ENCODE measurements at regions of chr19 and their contacts with region 1.

Region 1: DNA sequence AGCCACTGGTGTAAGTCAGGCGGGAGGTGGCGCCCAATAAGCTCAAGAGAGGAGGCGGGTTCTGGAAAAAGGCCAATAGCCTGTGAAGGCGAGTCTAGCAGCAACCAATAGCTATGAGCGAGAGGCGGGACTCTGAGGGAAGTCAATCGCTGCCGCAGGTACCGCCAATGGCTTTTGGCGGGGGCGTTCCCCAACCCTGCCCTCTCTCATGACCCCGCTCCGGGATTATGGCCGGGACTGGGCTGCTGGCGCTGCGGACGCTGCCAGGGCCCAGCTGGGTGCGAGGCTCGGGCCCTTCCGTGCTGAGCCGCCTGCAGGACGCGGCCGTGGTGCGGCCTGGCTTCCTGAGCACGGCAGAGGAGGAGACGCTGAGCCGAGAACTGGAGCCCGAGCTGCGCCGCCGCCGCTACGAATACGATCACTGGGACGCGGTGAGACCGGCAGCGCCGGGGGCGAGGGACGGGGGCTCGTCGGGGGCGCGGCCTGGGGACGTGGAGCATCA is at the start of gene ALKBH7:
- DNase-seq: peak; percentile 99
- ATAC-seq: peak; percentile 73
- H3K4me3 ChIP-seq: peak within 1 kb of the TSS; percentile 45 to 96 (median 93)
- H3K4me3 Mint-ChIP-seq: peak within 1 kb of the TSS; percentile 91
- H3K27ac ChIP-seq: peak within 1 kb of the TSS; percentile 88 to 98
- H3K27ac Mint-ChIP-seq: peak within 1 kb of the TSS; percentile 91
- H3K4me1 ChIP-seq: peaks cover 9 to 12% of the 10 kb centered on the region in 2 donors
- H3K4me1 Mint-ChIP-seq: peaks cover 11% of the 10 kb centered on the region
- H3K27me3 ChIP-seq: no peaks in the 10 kb centered on the region
- H3K27me3 Mint-ChIP-seq: no peaks in the 10 kb centered on the region
- CTCF ChIP-seq: no peak
- total RNA-seq, gene ALKBH7: 62.7 and 67.0 TPM in 2 replicates

Region 2: DNA sequence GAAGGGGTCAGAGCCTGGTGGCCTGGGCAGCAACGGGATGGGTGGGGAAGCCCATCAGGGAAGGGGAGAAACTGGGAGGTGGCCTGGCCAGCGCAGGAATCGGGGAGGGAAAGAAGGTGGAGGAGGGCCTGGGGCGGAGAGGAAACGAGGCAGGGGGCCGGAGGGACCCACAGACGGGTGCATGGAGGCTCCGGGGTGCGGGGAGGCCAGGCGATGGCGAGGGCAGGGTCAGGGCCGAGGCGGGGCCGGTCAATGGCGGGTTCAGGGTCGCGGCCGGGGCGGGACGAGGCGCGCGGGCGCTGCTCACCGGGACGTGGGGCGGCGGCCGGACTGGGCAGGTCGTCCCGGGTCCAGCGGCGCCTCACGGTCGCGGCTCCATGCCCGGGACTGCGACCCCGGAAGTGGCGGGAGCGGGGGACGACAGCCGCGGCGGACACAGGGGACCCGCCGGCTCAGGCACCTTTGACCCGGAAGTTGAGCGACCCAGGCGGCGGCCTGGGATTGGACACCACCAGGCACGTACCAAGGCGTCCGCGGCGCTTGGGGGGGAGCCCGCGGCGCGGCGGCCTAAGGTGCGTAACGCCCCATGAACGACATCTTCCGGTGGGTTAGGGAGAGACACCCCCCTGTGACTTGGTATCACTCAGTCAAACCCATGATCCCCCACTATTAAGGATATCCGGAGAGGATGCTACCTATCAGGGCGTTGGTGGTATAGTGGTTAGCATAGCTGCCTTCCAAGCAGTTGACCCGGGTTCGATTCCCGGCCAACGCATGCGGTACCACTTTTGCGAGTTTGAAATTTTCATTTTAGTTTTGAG is 1649.1 kb before region 1 on chr19 and contains the start of gene DPP9:
- CTCF ChIA-PET with region 1: no interaction called
- POLR2A ChIA-PET with region 1: no interaction called
- intact Hi-C with region 1: loop called (anchors 5 kb)
- DNase-seq: peak; percentile 100
- ATAC-seq: peak; percentile 94
- H3K4me3 ChIP-seq: peak within 1 kb of the TSS; percentile 71 to 97 (median 91)
- H3K4me3 Mint-ChIP-seq: peak within 1 kb of the TSS; percentile 97
- H3K27ac ChIP-seq: peak within 1 kb of the TSS; percentile 63 to 89
- H3K27ac Mint-ChIP-seq: peak within 1 kb of the TSS; percentile 98
- H3K4me1 ChIP-seq: peaks cover 20 to 26% of the 10 kb centered on the region in 2 donors
- H3K4me1 Mint-ChIP-seq: peaks cover 45% of the 10 kb centered on the region
- H3K27me3 ChIP-seq: no peaks in the 10 kb centered on the region
- H3K27me3 Mint-ChIP-seq: peaks cover 3% of the 10 kb centered on the region
- CTCF ChIP-seq: no peak
- total RNA-seq, gene DPP9: 109 and 115 TPM in 2 replicates

Region 3: GRCh38 chr19:6279931-6280591 is 92.6 kb before region 1 on chr19 and contains the start of gene MLLT1:
- CTCF ChIA-PET with region 1: no interaction called
- POLR2A ChIA-PET with region 1: no interaction called
- intact Hi-C with region 1: loop called (anchors 1 kb)
- DNase-seq: peak; percentile 97
- ATAC-seq: peak; percentile 97
- H3K4me3 ChIP-seq: peak within 1 kb of the TSS; percentile 44 to 85 (median 62)
- H3K4me3 Mint-ChIP-seq: peak within 1 kb of the TSS; percentile 89
- H3K27ac ChIP-seq: peak within 1 kb of the TSS; percentile 29 to 77
- H3K27ac Mint-ChIP-seq: peak within 1 kb of the TSS; percentile 64
- H3K4me1 ChIP-seq: peaks cover 15 to 23% of the 10 kb centered on the region in 2 donors
- H3K4me1 Mint-ChIP-seq: peaks cover 27% of the 10 kb centered on the region
- H3K27me3 ChIP-seq: no peaks in the 10 kb centered on the region
- H3K27me3 Mint-ChIP-seq: no peaks in the 10 kb centered on the region
- CTCF ChIP-seq: peak; percentile 90
- total RNA-seq, gene MLLT1: 40.2 and 45.7 TPM in 2 replicates

Region 4: GRCh38 chr19:6362027-6362350 is 10.7 kb before region 1 on chr19:
- CTCF ChIA-PET with region 1: interaction called, 3 read pairs
- POLR2A ChIA-PET with region 1: interaction called, 25 read pairs
- intact Hi-C with region 1: loop called (anchors 1 kb)
- DNase-seq: no peak
- ATAC-seq: no peak
- H3K4me3 ChIP-seq: peak overlapping the region in 4 of 5 experiments; percentile 60 to 72 (median 66)
- H3K4me3 Mint-ChIP-seq: peak overlapping the region; percentile 94
- H3K27ac ChIP-seq: peak overlapping the region; percentile 60 to 79
- H3K27ac Mint-ChIP-seq: peak overlapping the region; percentile 92
- H3K4me1 ChIP-seq: peaks cover 6 to 12% of the 10 kb centered on the region in 2 donors
- H3K4me1 Mint-ChIP-seq: peaks cover 14% of the 10 kb centered on the region
- H3K27me3 ChIP-seq: no peaks in the 10 kb centered on the region
- H3K27me3 Mint-ChIP-seq: no peaks in the 10 kb centered on the region
- CTCF ChIP-seq: no peak

Region 5: DNA sequence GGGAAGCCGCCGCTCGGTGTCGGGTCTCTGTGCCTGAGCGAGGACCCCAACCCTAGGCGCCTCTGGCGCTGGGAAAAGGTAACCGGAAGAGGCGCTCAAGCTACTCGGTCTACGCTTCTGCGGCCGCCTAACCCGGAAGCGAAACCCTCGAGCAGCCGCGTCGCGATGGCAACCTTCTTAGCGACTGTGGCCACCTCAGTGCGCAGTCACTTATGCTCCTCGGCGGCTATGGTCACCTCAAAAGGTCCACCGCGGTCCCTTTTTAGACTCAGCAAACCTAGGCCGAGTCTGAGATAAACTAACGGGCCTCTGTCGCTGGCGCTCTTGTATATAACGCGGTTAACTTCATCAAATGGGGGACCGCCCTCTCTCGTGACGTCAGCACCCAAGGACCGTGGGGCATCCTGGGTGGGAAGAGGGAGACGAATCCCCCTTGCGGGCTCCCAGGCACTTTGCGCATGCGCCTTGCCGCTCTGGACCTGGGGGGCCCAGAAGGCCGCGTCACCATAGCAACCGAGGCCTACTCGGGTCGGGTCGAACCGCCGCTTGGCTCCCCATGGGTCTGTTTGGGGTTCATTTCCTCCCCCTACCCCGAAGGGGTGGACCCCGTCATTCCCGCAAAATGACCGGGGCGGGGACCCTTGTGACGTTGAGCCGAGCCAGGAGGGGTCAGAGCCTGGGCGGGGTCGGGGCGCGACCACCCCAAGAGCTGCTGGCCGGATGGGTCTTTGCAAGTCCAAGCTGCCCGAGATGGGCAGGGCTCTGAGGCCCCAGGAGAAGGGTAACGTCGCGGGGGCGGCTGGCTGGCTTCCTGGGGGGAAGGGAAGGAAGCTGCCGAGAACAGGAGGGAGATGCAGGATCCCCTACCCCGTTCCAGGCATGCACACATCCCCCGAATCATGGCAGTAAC is 20.7 kb after region 1 on chr19 and contains the start of gene GTF2F1:
- CTCF ChIA-PET with region 1: interaction called, 5 read pairs
- POLR2A ChIA-PET with region 1: interaction called, 14 read pairs
- intact Hi-C with region 1: loop called (anchors 1 kb)
- DNase-seq: peak; percentile 98
- ATAC-seq: peak; percentile 82
- H3K4me3 ChIP-seq: peak within 1 kb of the TSS; percentile 70 to 91 (median 83)
- H3K4me3 Mint-ChIP-seq: peak within 1 kb of the TSS; percentile 95
- H3K27ac ChIP-seq: peak within 1 kb of the TSS; percentile 73 to 95
- H3K27ac Mint-ChIP-seq: peak within 1 kb of the TSS; percentile 97
- H3K4me1 ChIP-seq: peaks cover 15 to 16% of the 10 kb centered on the region in 2 donors
- H3K4me1 Mint-ChIP-seq: peaks cover 26% of the 10 kb centered on the region
- H3K27me3 ChIP-seq: no peaks in the 10 kb centered on the region
- H3K27me3 Mint-ChIP-seq: no peaks in the 10 kb centered on the region
- CTCF ChIP-seq: no peak
- total RNA-seq, gene GTF2F1: 56.5 and 63.4 TPM in 2 replicates

Region 6: GRCh38 chr19:6481541-6482342 is 109.1 kb after region 1 on chr19 and contains the start of gene DENND1C:
- CTCF ChIA-PET with region 1: no interaction called
- POLR2A ChIA-PET with region 1: no interaction called
- intact Hi-C with region 1: loop called (anchors 5 kb)
- DNase-seq: peak; percentile 82
- ATAC-seq: peak; percentile 98
- H3K4me3 ChIP-seq: peak within 1 kb of the TSS; percentile 61 to 97 (median 73)
- H3K4me3 Mint-ChIP-seq: peak within 1 kb of the TSS; percentile 98
- H3K27ac ChIP-seq: peak within 1 kb of the TSS; percentile 89 to 95
- H3K27ac Mint-ChIP-seq: peak within 1 kb of the TSS; percentile 95
- H3K4me1 ChIP-seq: peaks cover 13 to 23% of the 10 kb centered on the region in 2 donors
- H3K4me1 Mint-ChIP-seq: peaks cover 26% of the 10 kb centered on the region
- H3K27me3 ChIP-seq: no peaks in the 10 kb centered on the region
- H3K27me3 Mint-ChIP-seq: no peaks in the 10 kb centered on the region
- CTCF ChIP-seq: no peak
- total RNA-seq, gene DENND1C: 117 and 119 TPM in 2 replicates

Region 7: GRCh38 chr19:6753178-6754031 is 380.8 kb after region 1 on chr19:
- CTCF ChIA-PET with region 1: no interaction called
- POLR2A ChIA-PET with region 1: no interaction called
- intact Hi-C with region 1: loop called (anchors 2 kb)
- DNase-seq: peak; percentile 92
- ATAC-seq: peak; percentile 91
- H3K4me3 ChIP-seq: peak overlapping the region in 4 of 5 experiments; percentile 41 to 65 (median 58)
- H3K4me3 Mint-ChIP-seq: peak overlapping the region; percentile 94
- H3K27ac ChIP-seq: peak overlapping the region in 1 of 2 donors; percentile 35
- H3K27ac Mint-ChIP-seq: peak overlapping the region; percentile 96
- H3K4me1 ChIP-seq: peaks cover 14 to 29% of the 10 kb centered on the region in 2 donors
- H3K4me1 Mint-ChIP-seq: peaks cover 26% of the 10 kb centered on the region
- H3K27me3 ChIP-seq: no peaks in the 10 kb centered on the region
- H3K27me3 Mint-ChIP-seq: no peaks in the 10 kb centered on the region
- CTCF ChIP-seq: peak; percentile 68